Ovary (tissue), 10 donors: ENCODE measurements at regions of chr20 and their contacts with region 1.

Region 1: DNA sequence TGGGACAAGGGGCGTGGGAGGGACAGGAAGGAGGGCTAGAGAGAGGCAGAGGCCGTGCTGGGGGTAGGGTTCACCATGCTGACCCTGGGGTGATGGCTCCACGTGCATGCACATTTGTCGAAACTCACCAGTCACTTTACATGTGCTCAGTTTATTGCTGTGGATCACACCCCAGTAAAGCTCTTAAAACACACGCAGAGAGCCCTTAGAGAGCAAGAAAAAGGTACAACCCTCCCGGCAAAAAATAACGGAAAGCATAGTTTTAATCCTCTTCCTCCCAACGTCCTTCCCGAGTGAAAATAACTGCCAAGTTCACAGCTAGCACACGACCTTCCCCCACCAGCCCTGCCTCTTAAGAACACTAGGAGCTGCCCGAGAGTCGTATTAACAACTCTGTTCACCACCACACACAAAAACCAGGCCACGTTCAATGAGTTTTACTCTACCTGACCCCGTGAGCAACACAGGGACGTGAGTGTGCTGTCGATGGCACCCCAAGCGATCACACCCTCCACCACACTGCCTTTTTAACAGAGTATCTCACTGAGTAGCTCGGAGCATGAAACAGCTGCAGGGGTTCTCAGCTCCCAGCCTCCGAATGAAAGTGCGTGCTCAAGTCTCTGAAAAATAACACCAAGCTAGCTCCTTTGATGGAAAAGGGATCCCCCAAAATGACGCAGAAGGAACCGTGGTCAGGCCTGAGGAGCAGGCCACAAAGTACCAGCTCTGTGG is 39.7 kb downstream of the TAF4 start:
- DNase-seq: peak in 4 of 5 donors; percentile 59 to 71 (median 62)
- H3K4me3 ChIP-seq: no peak overlapping the region
- H3K27ac ChIP-seq: peak overlapping the region in 1 of 2 donors; percentile 57
- H3K4me1 ChIP-seq: peaks cover 20% of the 10 kb centered on the region
- H3K27me3 ChIP-seq: no peaks in the 10 kb centered on the region
- CTCF ChIP-seq: peak; percentile 47 to 64 (median 59)
- EP300 ChIP-seq: no peak
- POLR2A ChIP-seq: no peak

Region 2: GRCh38 chr20:62136283-62137091 is 110.5 kb after region 1 on chr20:
- intact Hi-C with region 1: loop called in 3 of 4 experiments (anchors 5 kb)
- DNase-seq: peak; percentile 44 to 77 (median 71)
- H3K4me3 ChIP-seq: no peak overlapping the region
- H3K27ac ChIP-seq: no peak overlapping the region
- H3K4me1 ChIP-seq: peaks cover 4% of the 10 kb centered on the region
- H3K27me3 ChIP-seq: no peaks in the 10 kb centered on the region
- CTCF ChIP-seq: peak; percentile 26 to 57 (median 49)
- EP300 ChIP-seq: no peak
- POLR2A ChIP-seq: no peak